Activated naive CD8-positive, alpha-beta T cell treated with anti-CD3 and anti-CD28 coated beads, Interleukin-2, amount 10 ng/mL, durations not matched to agents 7 days and 5 days (primary cell): ENCODE measurements at regions of chr1 and their contacts with region 1.

Region 1: GRCh38 chr1:185439727-185440415 is 122.8 kb upstream of the IVNS1ABP start:
- DNase-seq: peak; percentile 45
- ATAC-seq: peak; percentile 87
- H3K4me3 Mint-ChIP-seq: no peak overlapping the region
- H3K27ac Mint-ChIP-seq: no peak overlapping the region
- H3K4me1 Mint-ChIP-seq: peaks cover 21% of the 10 kb centered on the region
- H3K27me3 Mint-ChIP-seq: no peaks in the 10 kb centered on the region

Region 2: DNA sequence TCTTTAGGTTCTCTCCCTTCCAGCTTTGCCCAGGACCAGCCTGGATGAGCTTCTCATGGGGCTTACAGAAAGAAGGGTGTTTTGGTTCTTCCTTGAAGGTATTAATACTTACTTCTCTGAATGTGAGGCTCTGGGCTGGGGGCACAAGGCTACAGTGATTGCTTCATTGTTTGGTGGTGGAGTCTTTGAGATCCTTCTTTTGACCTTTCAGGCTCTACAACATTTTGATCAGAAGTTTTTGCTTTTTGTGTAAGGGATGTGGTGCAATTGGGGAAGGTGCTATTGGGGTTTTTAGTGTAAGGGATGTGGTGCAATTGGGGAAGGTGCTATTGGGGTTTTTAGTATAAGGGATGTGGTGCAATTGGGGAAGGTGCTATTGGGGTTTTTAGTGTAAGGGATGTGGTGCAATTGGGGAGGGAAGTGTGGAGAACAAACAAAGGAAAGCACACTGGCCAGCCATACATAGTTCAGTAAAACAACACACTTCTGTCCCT is 19.2 kb before region 1 on chr1:
- POLR2A ChIA-PET with region 1: interaction called, 24 read pairs
- DNase-seq: peak; percentile 42
- ATAC-seq: peak; percentile 88
- H3K4me3 Mint-ChIP-seq: peak overlapping the region; percentile 75
- H3K27ac Mint-ChIP-seq: peak overlapping the region; percentile 91
- H3K4me1 Mint-ChIP-seq: peaks cover 61% of the 10 kb centered on the region
- H3K27me3 Mint-ChIP-seq: no peaks in the 10 kb centered on the region